OCI-LY7 (cell line): ENCODE measurements at regions of chr5 and their contacts with region 1.

Region 1: GRCh38 chr5:157253547-157253946 is 12.4 kb upstream of the CYFIP2 start:
- DNase-seq: peak; percentile 71
- H3K4me3 ChIP-seq: peak overlapping the region; percentile 7
- H3K27ac ChIP-seq: peak overlapping the region; percentile 16
- H3K4me1 ChIP-seq: peaks cover 10% of the 10 kb centered on the region
- CTCF ChIP-seq: peak; percentile 99

Region 2: GRCh38 chr5:157148734-157149615 is 104.6 kb before region 1 on chr5:
- CTCF ChIA-PET with region 1: no interaction called
- POLR2A ChIA-PET with region 1: no interaction called
- intact Hi-C with region 1: loop called (anchors 1 kb)
- DNase-seq: peak; percentile 78
- H3K4me3 ChIP-seq: no peak overlapping the region
- H3K27ac ChIP-seq: no peak overlapping the region
- H3K4me1 ChIP-seq: no peaks in the 10 kb centered on the region
- CTCF ChIP-seq: peak; percentile 98

Region 3: DNA sequence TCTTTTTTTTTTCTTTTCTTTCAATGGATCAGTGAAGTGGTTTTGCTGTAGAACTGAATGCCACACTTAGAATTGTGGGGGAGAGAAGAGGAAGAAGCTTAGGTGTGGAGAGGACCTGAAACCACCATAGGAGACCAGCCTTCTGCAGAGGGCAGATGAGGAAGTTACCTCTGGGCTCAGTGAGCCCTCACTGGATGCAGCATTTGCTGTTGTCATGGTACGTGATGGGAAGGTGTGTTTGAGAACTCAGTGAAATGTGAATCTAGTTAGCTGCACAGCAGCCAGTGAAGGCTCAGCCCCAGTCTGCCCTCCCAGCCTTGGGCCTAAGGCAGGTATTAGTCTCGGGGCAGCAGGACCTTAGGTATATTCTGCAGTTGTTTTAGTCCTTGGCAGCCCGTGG is 29.9 kb after region 1 on chr5:
- CTCF ChIA-PET with region 1: interaction called, 5 read pairs
- POLR2A ChIA-PET with region 1: interaction called, 4 read pairs
- intact Hi-C with region 1: loop called (anchors 1 kb)
- DNase-seq: peak; percentile 89
- H3K4me3 ChIP-seq: peak overlapping the region; percentile 14
- H3K27ac ChIP-seq: peak overlapping the region; percentile 59
- H3K4me1 ChIP-seq: peaks cover 29% of the 10 kb centered on the region
- CTCF ChIP-seq: no peak

Region 4: DNA sequence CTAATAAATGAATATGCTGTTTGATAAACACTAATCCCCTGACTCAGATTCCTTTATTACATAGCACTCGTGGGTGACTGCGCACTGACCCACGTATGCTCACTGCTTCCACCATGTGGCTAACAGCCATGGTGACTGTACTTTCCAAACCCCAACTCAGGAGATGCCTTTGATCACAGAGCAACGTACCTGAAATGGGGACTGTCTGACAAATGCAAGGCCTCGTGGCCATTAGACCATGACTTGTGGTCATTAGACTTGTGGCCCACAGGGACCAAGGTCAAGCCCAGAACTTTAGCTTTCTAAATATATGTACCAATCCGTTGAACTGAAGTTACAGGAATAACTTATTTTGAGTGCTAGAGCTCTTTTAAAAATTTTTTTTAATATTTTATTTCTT is 58.9 kb after region 1 on chr5:
- CTCF ChIA-PET with region 1: interaction called, 6 read pairs
- POLR2A ChIA-PET with region 1: interaction called, 4 read pairs
- intact Hi-C with region 1: loop called (anchors 1 kb)
- DNase-seq: peak; percentile 72
- H3K4me3 ChIP-seq: no peak overlapping the region
- H3K27ac ChIP-seq: no peak overlapping the region
- H3K4me1 ChIP-seq: peaks cover 3% of the 10 kb centered on the region
- CTCF ChIP-seq: peak; percentile 87

Region 5: GRCh38 chr5:157328277-157328912 is 74.8 kb after region 1 on chr5:
- CTCF ChIA-PET with region 1: interaction called, 3 read pairs
- POLR2A ChIA-PET with region 1: no interaction called
- intact Hi-C with region 1: loop called (anchors 1 kb)
- DNase-seq: peak; percentile 73
- H3K4me3 ChIP-seq: no peak overlapping the region
- H3K27ac ChIP-seq: no peak overlapping the region
- H3K4me1 ChIP-seq: no peaks in the 10 kb centered on the region
- CTCF ChIP-seq: peak; percentile 88